Endothelial cell of umbilical vein (primary cell): ENCODE measurements at regions of chr14 and their contacts with region 1.

Region 1: DNA sequence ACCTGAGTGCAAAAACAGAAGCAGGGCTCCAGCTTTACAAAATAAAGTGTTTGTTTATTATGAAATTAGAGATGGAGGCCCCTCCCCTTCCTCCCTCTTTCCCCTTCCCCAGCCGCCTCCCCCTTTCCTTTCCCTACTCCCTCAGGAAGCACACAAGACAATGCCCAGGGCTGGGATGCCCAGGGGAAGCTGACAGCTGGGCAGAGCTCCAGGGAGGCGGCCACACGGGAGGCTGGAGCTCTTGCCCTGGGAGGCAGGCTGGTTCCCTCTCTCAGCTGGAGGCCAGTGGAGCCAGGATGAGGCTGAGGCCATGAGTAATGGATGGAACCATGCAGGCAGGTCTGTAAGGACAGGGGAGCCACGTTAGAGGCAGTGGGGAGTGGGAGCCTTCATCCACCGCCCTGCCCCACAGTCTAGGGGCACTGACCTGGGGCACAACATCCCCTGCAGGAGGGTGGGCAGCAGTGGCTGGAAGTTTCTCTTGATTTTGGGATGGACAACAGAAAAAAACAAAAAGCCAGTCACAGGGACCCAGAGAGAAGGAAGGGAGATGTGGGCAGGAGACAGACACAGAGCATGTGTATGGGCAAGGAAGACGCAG is 5.1 kb downstream of the PSMB11 start:
- DNase-seq: peak; percentile 81
- H3K4me3 ChIP-seq: no peak overlapping the region
- H3K27ac ChIP-seq: peak overlapping the region; percentile 37
- H3K4me1 ChIP-seq: peaks cover 41% of the 10 kb centered on the region
- H3K27me3 ChIP-seq: no peaks in the 10 kb centered on the region
- CTCF ChIP-seq: no peak
- POLR2A ChIP-seq: no peak

Region 2: DNA sequence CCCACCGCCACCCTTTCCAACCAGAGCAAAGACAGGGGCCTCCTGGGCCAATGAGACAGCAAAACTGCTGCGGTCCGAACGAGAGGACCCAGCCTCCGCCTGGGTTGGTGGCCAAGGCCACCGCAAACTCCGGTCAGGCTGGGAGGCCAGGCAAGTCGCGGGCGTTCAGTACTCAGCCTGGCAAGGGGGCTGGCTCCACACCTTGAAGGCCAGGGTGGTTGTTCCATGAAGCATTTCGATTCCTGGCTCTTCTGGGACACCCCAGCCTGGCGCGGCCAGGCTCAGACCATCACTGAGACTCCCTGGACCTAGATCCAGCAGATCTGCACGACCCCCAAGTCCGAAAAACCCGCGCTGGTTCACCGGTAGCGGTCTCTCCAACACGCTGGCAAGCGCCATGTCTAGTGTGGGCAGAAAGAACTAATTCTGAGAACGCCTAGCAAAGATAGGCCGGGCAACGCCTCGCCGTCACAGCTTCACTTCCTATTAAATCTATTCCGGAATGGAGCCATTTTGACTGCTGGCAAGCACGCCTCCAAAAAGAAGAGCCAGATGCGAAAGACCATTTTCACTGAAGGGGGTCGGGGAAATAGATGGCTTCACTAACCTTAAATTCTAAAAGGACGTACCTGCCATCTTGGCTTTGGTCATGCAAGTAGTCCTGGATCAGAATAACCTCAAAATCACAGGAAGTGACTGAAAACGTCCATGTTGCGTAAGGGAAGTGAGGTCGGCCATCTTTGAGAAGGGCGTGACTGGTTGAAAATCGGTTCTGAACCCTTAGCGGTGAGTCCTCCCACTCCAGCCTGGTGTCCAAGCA is 12.4 kb before region 1 on chr14 and contains the start of gene PSMB5:
- CTCF ChIA-PET with region 1: interaction called, 4 read pairs
- POLR2A ChIA-PET with region 1: interaction called, 4 read pairs
- dilution Hi-C with region 1: no loop called
- intact Hi-C with region 1: loop called (anchors 1 kb)
- DNase-seq: peak; percentile 97
- H3K4me3 ChIP-seq: peak within 1 kb of the TSS; percentile 73 to 88 (median 84)
- H3K27ac ChIP-seq: peak within 1 kb of the TSS; percentile 88
- H3K4me1 ChIP-seq: peaks cover 12% of the 10 kb centered on the region
- H3K27me3 ChIP-seq: no peaks in the 10 kb centered on the region
- CTCF ChIP-seq: no peak
- POLR2A ChIP-seq: peak; percentile 89
- total RNA-seq, gene PSMB5: 214 and 236 TPM in 2 replicates